ENCODE measurements at regions of chr21 and their contacts with region 1.

Region 1: DNA sequence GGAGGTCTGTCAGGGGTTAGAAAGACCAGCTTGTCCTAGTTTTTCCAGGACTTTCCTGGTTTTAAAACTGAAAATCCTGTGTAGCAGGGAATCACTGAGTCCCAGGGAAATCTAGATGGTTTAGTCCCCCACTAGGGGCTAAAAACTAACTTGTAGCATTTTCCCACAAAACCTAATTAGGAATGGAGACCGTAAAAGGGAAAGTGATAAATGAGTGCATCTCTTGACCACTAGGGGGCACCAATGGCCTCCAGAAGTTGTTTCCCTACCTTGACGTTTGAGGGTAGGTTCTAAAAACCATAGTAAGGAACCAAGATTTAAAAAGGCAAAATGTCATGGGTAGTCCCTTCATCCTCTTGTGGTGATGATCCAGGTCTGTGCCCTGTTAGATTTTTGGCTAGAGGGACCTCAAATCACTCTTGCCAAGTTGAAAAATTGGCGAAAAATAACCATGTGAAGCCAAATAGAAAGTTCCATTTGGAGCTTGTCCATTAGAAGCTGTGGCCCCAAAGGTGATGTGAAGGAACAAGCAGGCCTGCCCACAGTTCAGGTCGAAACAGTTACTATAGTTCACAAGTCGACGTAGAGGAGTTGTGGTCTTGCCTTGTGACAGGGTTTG is 24.5 kb downstream of the CLIC6 start:
- DNase-seq: peak in 1 of 2 donors; percentile 38
- ATAC-seq: peak; percentile 29 to 43
- H3K4me3 ChIP-seq: no peak overlapping the region
- H3K27ac ChIP-seq: no peak overlapping the region
- H3K4me1 ChIP-seq: peaks cover 14 to 24% of the 10 kb centered on the region in 2 donors
- H3K27me3 ChIP-seq: no peaks in the 10 kb centered on the region
- CTCF ChIP-seq: peak; percentile 56 to 84 (median 75)
- POLR2A ChIP-seq: no peak

Region 2: DNA sequence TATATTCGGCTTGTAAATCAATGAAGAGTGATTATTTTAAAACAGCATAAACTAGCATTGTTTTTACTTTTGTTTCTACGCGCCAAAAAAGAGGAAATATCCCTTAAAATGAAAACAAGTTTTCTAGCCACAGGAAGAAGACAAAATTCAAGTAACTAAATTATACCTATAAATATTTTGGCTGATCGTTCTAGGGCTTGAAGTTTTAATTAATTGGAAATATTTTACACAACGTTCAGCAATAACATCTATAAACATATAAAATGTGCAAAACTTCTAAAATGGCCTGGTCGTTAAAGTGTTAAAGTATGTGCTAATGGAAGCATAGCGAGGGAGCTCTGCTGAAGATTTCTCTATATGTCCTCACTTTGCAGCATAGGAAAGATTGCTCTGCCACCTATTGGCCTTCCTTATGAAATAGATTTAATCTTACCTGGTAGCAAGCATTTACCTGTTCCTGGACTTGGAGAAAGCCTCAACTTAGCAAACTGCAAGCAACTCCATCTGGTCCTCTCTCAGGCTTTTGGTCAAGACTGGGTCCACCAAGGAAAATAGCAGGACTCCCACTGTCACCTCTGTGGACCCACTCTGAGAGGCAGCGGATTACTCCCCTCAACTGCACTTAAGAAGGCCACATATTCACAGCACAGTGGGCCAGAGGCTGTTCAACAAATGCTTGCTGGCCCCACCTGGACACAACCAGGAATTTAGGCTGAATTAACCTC is 707.1 kb after region 1 on chr21:
- in situ Hi-C with region 1: loop called in 1 of 4 experiments (anchors 25 kb)
- intact Hi-C with region 1: no loop called
- DNase-seq: peak in 1 of 2 donors; percentile 8
- ATAC-seq: peak; percentile 93 to 98
- H3K4me3 ChIP-seq: no peak overlapping the region
- H3K27ac ChIP-seq: no peak overlapping the region
- H3K4me1 ChIP-seq: peaks cover 0 to 14% of the 10 kb centered on the region in 2 donors
- H3K27me3 ChIP-seq: no peaks in the 10 kb centered on the region
- CTCF ChIP-seq: peak; percentile 54 to 71 (median 59)
- POLR2A ChIP-seq: no peak

Region 3: DNA sequence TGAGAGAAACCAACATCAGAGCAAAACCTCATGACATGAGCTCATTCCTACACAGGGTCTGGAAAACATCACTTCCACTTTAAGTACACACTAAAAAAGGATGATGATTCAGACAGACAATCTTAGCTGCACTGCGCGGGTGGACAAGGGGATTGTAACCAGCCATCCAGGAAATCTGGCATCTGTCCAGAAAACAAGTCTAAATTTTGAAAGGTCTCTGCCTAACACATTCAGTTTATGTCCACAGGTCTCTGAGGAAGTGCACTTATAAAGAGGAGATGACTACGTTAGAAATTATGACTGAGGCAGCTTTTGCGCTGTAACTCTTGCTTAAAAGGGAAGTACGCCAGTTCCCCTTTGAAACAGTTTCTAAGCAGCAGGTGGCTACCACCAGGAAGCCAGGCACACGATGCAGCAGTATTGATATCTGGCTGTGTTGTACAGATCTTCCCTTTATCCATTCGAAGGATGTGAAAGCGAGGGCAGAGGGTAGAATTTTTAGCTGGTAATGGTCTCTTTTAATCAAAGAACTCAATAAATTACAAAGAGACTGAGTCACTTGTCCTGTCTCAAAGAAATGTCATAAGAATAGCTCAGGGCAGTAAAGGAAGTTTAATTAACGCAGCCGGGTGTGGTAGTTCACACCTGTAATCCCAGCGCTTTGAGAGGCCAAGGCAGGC is 1239.1 kb after region 1 on chr21:
- in situ Hi-C with region 1: loop called in 1 of 4 experiments (anchors 25 kb)
- intact Hi-C with region 1: no loop called
- DNase-seq: peak; percentile 62 to 69
- ATAC-seq: peak; percentile 94 to 97
- H3K4me3 ChIP-seq: peak overlapping the region in 1 of 4 donors; percentile 9
- H3K27ac ChIP-seq: peak overlapping the region; percentile 67 to 77 (median 72)
- H3K4me1 ChIP-seq: peaks cover 8 to 19% of the 10 kb centered on the region in 2 donors
- H3K27me3 ChIP-seq: no peaks in the 10 kb centered on the region
- CTCF ChIP-seq: no peak
- POLR2A ChIP-seq: peak; percentile 9 to 34

Region 4: GRCh38 chr21:35940074-35940927 is 1247.0 kb after region 1 on chr21:
- in situ Hi-C with region 1: loop called in 1 of 4 experiments (anchors 25 kb)
- intact Hi-C with region 1: loop called (anchors 5 kb)
- DNase-seq: peak; percentile 12 to 32
- ATAC-seq: peak; percentile 94 to 99
- H3K4me3 ChIP-seq: no peak overlapping the region
- H3K27ac ChIP-seq: no peak overlapping the region
- H3K4me1 ChIP-seq: peaks cover 4% of the 10 kb centered on the region in 2 donors
- H3K27me3 ChIP-seq: no peaks in the 10 kb centered on the region
- CTCF ChIP-seq: peak in 4 of 5 experiments; percentile 48 to 65 (median 56)
- POLR2A ChIP-seq: no peak